ENCODE measurements at regions of chr4 and their contacts with region 1.

Region 1: GRCh38 chr4:80058740-80059139 is 14.3 kb downstream of the ANTXR2 start:
- DNase-seq: peak; percentile 59
- ATAC-seq: peak; percentile 86
- H3K4me3 Mint-ChIP-seq: peak overlapping the region; percentile 68
- H3K27ac Mint-ChIP-seq: peak overlapping the region; percentile 89
- H3K4me1 Mint-ChIP-seq: peaks cover 54% of the 10 kb centered on the region
- H3K27me3 Mint-ChIP-seq: no peaks in the 10 kb centered on the region

Region 2: DNA sequence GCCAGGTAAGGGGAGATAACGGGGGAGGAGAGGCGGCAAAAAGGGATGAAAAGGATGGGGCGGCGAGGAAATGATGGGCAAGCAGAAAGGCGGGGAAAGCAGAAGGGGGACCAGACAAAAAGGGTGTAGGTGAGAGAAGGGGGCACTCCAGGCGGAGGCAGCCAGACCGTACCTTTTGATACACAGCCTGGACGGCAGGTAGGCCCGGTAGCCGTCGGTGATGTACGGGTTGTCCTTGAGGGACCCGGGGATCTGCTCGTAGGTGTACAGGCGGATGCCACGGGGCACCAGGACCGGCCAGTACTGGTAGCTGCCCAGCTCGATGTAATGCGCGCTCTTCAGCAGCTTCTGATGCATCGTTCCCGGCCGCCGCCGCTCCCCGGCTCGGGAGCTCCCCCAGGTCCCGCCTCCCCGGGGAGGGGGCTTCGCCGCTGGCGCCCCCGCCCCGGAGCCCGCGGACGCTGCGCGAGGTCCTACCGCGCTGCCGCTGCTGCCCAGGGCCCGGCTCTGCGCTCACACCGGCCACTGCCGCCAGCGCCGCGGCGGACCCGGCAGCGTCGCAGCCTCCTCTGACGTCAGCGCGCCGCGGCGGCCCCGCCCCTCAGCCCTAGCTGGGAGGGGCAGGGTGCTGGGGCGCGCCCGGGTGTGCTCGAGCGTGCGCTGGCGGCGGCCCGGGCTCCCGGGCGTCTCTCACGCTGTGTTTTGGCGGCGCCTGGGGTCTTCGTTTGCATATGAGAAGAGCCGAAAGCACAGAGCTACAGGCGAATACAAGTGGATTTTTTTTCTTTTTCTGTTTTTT is 1119.7 kb before region 1 on chr4 and contains the start of gene PAQR3:
- CTCF ChIA-PET with region 1: no interaction called
- POLR2A ChIA-PET with region 1: no interaction called
- intact Hi-C with region 1: loop called in 1 of 2 experiments (anchors 1 kb)
- DNase-seq: peak; percentile 91
- ATAC-seq: peak; percentile 95
- H3K4me3 Mint-ChIP-seq: peak within 1 kb of the TSS; percentile 88
- H3K27ac Mint-ChIP-seq: peak within 1 kb of the TSS; percentile 83
- H3K4me1 Mint-ChIP-seq: peaks cover 30% of the 10 kb centered on the region
- H3K27me3 Mint-ChIP-seq: peaks cover 8% of the 10 kb centered on the region
- total RNA-seq, gene PAQR3: 7.8 to 8.8 TPM

Region 3: GRCh38 chr4:79823148-79823763 is 235.5 kb before region 1 on chr4:
- CTCF ChIA-PET with region 1: no interaction called
- POLR2A ChIA-PET with region 1: no interaction called
- intact Hi-C with region 1: no loop called
- DNase-seq: no peak
- ATAC-seq: no peak
- H3K4me3 Mint-ChIP-seq: no peak overlapping the region
- H3K27ac Mint-ChIP-seq: no peak overlapping the region
- H3K4me1 Mint-ChIP-seq: no peaks in the 10 kb centered on the region
- H3K27me3 Mint-ChIP-seq: peaks cover 5% of the 10 kb centered on the region

Region 4: DNA sequence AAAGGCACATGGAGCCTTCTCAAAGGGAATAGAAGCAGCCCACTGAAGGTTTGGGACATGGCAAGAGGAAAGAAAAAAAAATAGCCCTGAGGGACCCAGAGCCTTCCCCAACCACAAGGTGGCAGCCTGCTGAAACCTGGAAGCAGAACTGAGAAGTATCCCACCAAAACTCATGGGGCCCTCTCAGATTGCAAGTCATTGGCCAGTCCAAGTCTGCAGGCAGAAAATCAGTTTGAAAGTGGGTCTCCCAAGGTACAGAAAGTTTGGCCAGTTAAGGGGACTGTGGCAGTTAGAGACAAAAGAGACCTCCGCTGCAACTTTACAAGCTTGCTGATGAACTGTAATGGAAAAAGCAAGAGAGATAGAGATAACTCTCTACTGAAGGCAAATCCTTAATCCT is 141.5 kb before region 1 on chr4:
- CTCF ChIA-PET with region 1: no interaction called
- POLR2A ChIA-PET with region 1: no interaction called
- intact Hi-C with region 1: loop called in 1 of 2 experiments (anchors 10 kb)
- DNase-seq: peak; percentile 67
- ATAC-seq: peak; percentile 60
- H3K4me3 Mint-ChIP-seq: no peak overlapping the region
- H3K27ac Mint-ChIP-seq: peak overlapping the region; percentile 58
- H3K4me1 Mint-ChIP-seq: peaks cover 19% of the 10 kb centered on the region
- H3K27me3 Mint-ChIP-seq: no peaks in the 10 kb centered on the region

Region 5: DNA sequence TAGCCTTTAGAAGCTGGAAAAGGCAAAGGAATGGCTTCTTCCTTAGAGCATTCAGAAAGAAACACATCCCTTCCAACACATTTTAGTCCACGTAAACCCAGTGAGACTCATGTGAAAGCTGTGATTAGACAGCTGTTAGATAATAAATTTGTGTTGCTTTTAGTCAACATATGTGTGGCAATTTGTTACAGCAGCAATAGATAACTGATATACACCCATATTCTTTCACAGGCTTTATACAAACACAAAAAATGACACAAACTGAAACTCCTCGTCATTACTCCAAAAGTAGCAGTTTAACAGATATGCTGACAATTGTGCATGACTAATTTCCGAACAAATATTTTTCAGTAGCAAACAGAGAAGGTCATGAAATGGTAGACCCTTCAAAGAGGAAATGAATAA is 51.0 kb before region 1 on chr4:
- CTCF ChIA-PET with region 1: no interaction called
- POLR2A ChIA-PET with region 1: no interaction called
- intact Hi-C with region 1: loop called (anchors 1 kb)
- DNase-seq: no peak
- ATAC-seq: peak; percentile 68
- H3K4me3 Mint-ChIP-seq: no peak overlapping the region
- H3K27ac Mint-ChIP-seq: peak overlapping the region; percentile 67
- H3K4me1 Mint-ChIP-seq: peaks cover 43% of the 10 kb centered on the region
- H3K27me3 Mint-ChIP-seq: no peaks in the 10 kb centered on the region